KBM-7 (cell line): ENCODE measurements at regions of chr18 and their contacts with region 1.

Region 1: GRCh38 chr18:3297025-3297984 is 35.4 kb downstream of the MYL12B start:
- DNase-seq: peak; percentile 95

Region 2: DNA sequence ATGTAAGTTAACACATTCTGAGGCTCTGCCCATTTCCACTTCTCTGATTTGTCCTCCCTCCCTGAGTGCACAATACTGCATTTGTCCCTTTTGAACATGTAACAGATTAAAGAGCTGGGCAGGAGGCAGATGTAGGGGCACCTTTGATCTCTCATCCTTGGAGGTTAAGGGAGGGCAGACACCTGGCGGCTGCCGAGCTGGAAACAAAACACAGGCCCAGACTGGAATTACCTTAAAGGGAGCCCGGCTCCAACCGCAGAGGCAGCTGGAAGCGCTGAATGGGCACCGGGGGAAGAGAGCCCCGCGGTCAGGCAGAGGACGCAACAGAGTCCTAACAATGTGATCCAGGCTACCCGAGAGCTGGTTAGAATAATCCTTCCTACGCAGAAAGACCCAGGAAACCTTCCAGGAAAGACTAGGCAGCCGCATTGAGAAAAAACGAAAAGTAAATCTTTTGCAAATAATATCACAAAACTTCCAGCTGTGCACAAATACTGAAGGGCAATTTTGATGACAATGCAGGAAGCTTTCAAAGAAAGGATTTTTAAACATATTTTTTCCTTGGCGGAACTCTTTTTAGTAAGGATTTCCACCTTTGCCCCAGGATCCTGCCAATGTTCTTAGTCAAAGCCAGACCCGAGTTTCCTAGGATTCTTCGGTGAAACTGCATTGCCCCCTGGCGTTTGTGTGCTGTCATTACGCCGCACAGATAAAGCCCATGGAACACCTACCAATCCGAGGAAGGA is 368.6 kb after region 1 on chr18:
- in situ Hi-C with region 1: loop called (anchors 25 kb)
- DNase-seq: peak; percentile 86

Region 3: GRCh38 chr18:3869848-3870247 is 572.5 kb after region 1 on chr18:
- in situ Hi-C with region 1: loop called (anchors 25 kb)
- DNase-seq: peak; percentile 32

Region 4: GRCh38 chr18:3995476-3996102 is 698.3 kb after region 1 on chr18:
- in situ Hi-C with region 1: loop called (anchors 25 kb)
- DNase-seq: peak; percentile 87